ENCODE measurements at regions of chr1 and their contacts with region 1.

Region 1: GRCh38 chr1:183932412-183932811 is 105.1 kb downstream of the COLGALT2 start:
- DNase-seq: no peak
- ATAC-seq: no peak; the same call in 1 of the 2 replicates
- H3K4me3 ChIP-seq: no peak overlapping the region
- H3K27ac ChIP-seq: no peak overlapping the region
- H3K4me1 ChIP-seq: no peaks in the 10 kb centered on the region
- H3K27me3 ChIP-seq: no peaks in the 10 kb centered on the region
- CTCF ChIP-seq: no peak

Region 2: DNA sequence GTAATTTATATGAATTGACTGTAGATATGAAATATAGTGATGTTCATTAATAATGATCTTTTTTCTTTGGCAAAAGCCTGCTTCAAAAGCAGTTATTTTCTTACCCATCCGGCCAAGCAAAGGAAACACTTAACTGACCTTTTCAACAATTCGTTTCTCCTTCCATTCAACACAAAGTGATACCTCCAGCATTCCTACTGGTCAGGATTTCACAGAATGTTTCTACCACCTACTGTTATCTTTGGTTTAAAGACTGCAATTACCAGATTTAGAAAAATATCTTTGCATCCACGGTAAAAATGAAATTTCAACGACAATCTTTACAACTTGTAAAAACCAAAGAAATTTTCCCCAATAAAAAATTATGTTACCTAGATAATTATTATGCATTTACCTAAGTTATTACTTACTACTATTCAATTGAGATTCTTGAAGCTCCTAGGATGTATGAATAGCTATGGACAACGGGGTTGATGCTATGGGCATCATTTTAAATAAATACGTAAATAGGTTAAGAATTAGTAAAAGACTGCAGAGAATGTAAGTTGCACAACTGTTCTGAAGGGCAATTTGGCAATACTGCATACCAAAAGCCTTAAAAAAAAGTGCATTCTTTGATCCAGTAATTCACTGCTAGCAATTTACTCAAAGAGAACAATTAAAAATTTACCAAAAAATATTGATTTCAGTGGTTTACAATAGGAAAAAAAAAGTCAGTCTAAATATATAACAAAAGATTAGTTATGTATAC is 300.5 kb before region 1 on chr1:
- CTCF ChIA-PET with region 1: interaction called, 3 read pairs
- POLR2A ChIA-PET with region 1: interaction called, 12 read pairs
- in situ Hi-C with region 1: no loop called
- intact Hi-C with region 1: no loop called
- DNase-seq: no peak
- ATAC-seq: no peak
- H3K4me3 ChIP-seq: no peak overlapping the region
- H3K27ac ChIP-seq: no peak overlapping the region
- H3K4me1 ChIP-seq: peaks cover 19% of the 10 kb centered on the region
- H3K27me3 ChIP-seq: no peaks in the 10 kb centered on the region
- CTCF ChIP-seq: no peak

Region 3: DNA sequence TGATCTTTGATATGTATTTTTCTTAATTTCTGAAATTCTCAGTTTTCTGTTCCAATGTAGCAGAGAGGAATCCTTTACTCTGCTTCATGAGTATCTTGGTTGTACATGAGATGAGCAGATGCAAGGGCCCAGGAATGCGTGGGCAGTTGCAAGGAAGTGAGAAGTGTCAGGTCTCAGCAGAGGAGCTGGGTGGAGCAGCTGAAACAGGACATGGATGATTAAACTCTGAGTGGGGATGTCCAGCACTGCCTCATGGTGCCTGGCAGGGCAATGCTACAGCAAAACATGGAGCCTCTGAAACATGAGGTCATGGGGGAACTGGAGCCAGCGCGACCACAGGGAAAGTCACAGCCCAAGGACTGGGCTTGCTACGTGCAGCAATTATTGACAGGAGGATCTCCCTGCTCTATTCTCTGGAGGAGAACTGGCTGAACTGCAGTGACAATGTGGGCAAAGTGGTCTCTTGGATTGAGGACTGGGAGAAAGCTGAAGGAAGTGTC is 56.7 kb after region 1 on chr1:
- CTCF ChIA-PET with region 1: no interaction called
- POLR2A ChIA-PET with region 1: no interaction called
- in situ Hi-C with region 1: no loop called
- intact Hi-C with region 1: no loop called
- DNase-seq: no peak
- ATAC-seq: no peak
- H3K4me3 ChIP-seq: no peak overlapping the region
- H3K27ac ChIP-seq: no peak overlapping the region
- H3K4me1 ChIP-seq: no peaks in the 10 kb centered on the region
- H3K27me3 ChIP-seq: no peaks in the 10 kb centered on the region
- CTCF ChIP-seq: no peak

Region 4: GRCh38 chr1:184222652-184223052 is 290.2 kb after region 1 on chr1:
- CTCF ChIA-PET with region 1: no interaction called
- POLR2A ChIA-PET with region 1: no interaction called
- in situ Hi-C with region 1: no loop called
- intact Hi-C with region 1: loop called (anchors 10 kb)
- DNase-seq: peak; percentile 54
- ATAC-seq: no peak
- H3K4me3 ChIP-seq: no peak overlapping the region
- H3K27ac ChIP-seq: no peak overlapping the region
- H3K4me1 ChIP-seq: 0 out of 2 replicates have a peak, but pooled peaks cover 2% of the 10 kb centered on the region
- H3K27me3 ChIP-seq: no peaks in the 10 kb centered on the region
- CTCF ChIP-seq: peak; percentile 94

Measured in Panc1 (cell line).